Right lobe of liver (tissue), 6 donors: ENCODE measurements at regions of chr1 and their contacts with region 1.

Region 1: GRCh38 chr1:62407405-62408009 is 29.3 kb upstream of the USP1 start:
- DNase-seq: no peak
- ATAC-seq: peak; percentile 80 to 87 (median 84)
- H3K4me3 ChIP-seq: no peak overlapping the region
- H3K27ac ChIP-seq: no peak overlapping the region
- H3K4me1 ChIP-seq: no peaks in the 10 kb centered on the region
- H3K27me3 ChIP-seq: no peaks in the 10 kb centered on the region
- CTCF ChIP-seq: peak; percentile 74 to 85 (median 77)
- POLR2A ChIP-seq: no peak

Region 2: DNA sequence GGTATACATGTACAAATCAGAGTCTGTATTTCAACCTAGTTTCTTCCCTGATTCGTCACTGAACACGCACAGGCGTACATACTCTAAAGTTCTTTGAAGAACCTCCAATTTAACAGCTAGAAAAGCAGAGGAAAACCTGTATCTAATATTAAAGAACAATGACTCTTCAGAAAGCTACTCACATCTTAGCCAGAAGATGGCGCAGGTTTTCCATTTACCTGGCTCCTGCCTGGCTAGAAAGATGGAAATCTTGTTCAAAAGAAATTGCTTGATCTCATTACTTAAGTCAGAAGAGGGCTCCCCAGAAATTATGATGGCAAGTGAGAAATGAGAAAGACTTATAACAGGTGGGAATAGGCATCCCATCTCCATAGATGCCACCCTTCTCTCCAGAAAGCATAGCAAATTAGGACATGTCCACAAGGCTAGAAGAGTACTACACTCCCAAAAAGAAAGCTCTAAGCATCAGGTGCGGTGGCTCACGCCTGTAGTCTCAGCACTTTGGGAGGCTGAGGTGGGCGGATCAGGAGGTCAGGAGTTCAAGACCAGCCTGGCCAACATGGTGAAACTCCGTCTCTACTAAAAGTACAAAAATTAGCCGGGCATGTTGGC is 231.8 kb before region 1 on chr1:
- intact Hi-C with region 1: loop called (anchors 5 kb)
- DNase-seq: no peak
- ATAC-seq: peak; percentile 66 to 75 (median 72)
- H3K4me3 ChIP-seq: no peak overlapping the region
- H3K27ac ChIP-seq: no peak overlapping the region
- H3K4me1 ChIP-seq: no peaks in the 10 kb centered on the region
- H3K27me3 ChIP-seq: no peaks in the 10 kb centered on the region
- CTCF ChIP-seq: peak; percentile 76 to 80 (median 79)
- POLR2A ChIP-seq: no peak

Region 3: GRCh38 chr1:62424411-62424810 is 16.9 kb after region 1 on chr1:
- intact Hi-C with region 1: no loop called
- DNase-seq: no peak
- ATAC-seq: no peak
- H3K4me3 ChIP-seq: no peak overlapping the region
- H3K27ac ChIP-seq: no peak overlapping the region
- H3K4me1 ChIP-seq: no peaks in the 10 kb centered on the region
- H3K27me3 ChIP-seq: no peaks in the 10 kb centered on the region
- CTCF ChIP-seq: no peak
- POLR2A ChIP-seq: no peak